Naive thymus-derived CD4-positive, alpha-beta T cell (primary cell): ENCODE measurements at regions of chr1 and their contacts with region 1.

Region 1: GRCh38 chr1:92563457-92564216 is 76.9 kb upstream of the GFI1 start:
- DNase-seq: no peak
- ATAC-seq: peak; percentile 63
- H3K4me3 ChIP-seq: no peak overlapping the region
- H3K4me3 Mint-ChIP-seq: no peak overlapping the region
- H3K27ac ChIP-seq: no peak overlapping the region
- H3K27ac Mint-ChIP-seq: peak overlapping the region in 1 of 9 donors; percentile 55
- H3K4me1 ChIP-seq: no peaks in the 10 kb centered on the region
- H3K4me1 Mint-ChIP-seq: peaks cover 0 to 34% (median 5%) of the 10 kb centered on the region in 7 donors
- H3K27me3 ChIP-seq: no peaks in the 10 kb centered on the region
- H3K27me3 Mint-ChIP-seq: no peaks in the 10 kb centered on the region

Region 2: GRCh38 chr1:92544756-92545165 is 18.9 kb before region 1 on chr1:
- CTCF ChIA-PET with region 1: no interaction called
- POLR2A ChIA-PET with region 1: no interaction called
- intact Hi-C with region 1: loop called in 1 of 2 experiments (anchors 2 kb)
- DNase-seq: no peak
- ATAC-seq: peak; percentile 49
- H3K4me3 ChIP-seq: no peak overlapping the region
- H3K4me3 Mint-ChIP-seq: peak overlapping the region in 2 of 10 donors; percentile 48 to 49
- H3K27ac ChIP-seq: no peak overlapping the region
- H3K27ac Mint-ChIP-seq: peak overlapping the region in 2 of 9 donors; percentile 31 to 47
- H3K4me1 ChIP-seq: no peaks in the 10 kb centered on the region
- H3K4me1 Mint-ChIP-seq: peaks cover 6 to 53% (median 20%) of the 10 kb centered on the region in 7 donors
- H3K27me3 ChIP-seq: no peaks in the 10 kb centered on the region
- H3K27me3 Mint-ChIP-seq: no peaks in the 10 kb centered on the region

Region 3: GRCh38 chr1:92583821-92584760 is 20.5 kb after region 1 on chr1:
- CTCF ChIA-PET with region 1: no interaction called
- POLR2A ChIA-PET with region 1: no interaction called
- intact Hi-C with region 1: loop called in 1 of 2 experiments (anchors 2 kb)
- DNase-seq: peak in 7 of 9 donors; percentile 50 to 82 (median 76)
- ATAC-seq: peak; percentile 93
- H3K4me3 ChIP-seq: peak overlapping the region; percentile 30
- H3K4me3 Mint-ChIP-seq: peak overlapping the region; percentile 25 to 88 (median 68)
- H3K27ac ChIP-seq: peak overlapping the region; percentile 47
- H3K27ac Mint-ChIP-seq: peak overlapping the region; percentile 41 to 93 (median 86)
- H3K4me1 ChIP-seq: peaks cover 27 to 38% of the 10 kb centered on the region in 2 donors
- H3K4me1 Mint-ChIP-seq: peaks cover 22 to 66% (median 63%) of the 10 kb centered on the region in 7 donors
- H3K27me3 ChIP-seq: no peaks in the 10 kb centered on the region
- H3K27me3 Mint-ChIP-seq: no peaks in the 10 kb centered on the region